ENCODE measurements at regions of chr2 and their contacts with region 1.

Region 1: GRCh38 chr2:240310645-240311044 is 124.8 kb upstream of the GPC1 start:
- DNase-seq: no peak
- ATAC-seq: peak; percentile 58
- H3K4me3 ChIP-seq: no peak overlapping the region
- H3K27ac ChIP-seq: no peak overlapping the region
- H3K4me1 ChIP-seq: no peaks in the 10 kb centered on the region
- H3K27me3 ChIP-seq: peaks cover 4 to 30% of the 10 kb centered on the region in 2 experiments; a peak in 3 of 5 replicates
- CTCF ChIP-seq: no peak
- EP300 ChIP-seq: no peak
- POLR2A ChIP-seq: no peak
- RAD21 ChIP-seq: no peak

Region 2: DNA sequence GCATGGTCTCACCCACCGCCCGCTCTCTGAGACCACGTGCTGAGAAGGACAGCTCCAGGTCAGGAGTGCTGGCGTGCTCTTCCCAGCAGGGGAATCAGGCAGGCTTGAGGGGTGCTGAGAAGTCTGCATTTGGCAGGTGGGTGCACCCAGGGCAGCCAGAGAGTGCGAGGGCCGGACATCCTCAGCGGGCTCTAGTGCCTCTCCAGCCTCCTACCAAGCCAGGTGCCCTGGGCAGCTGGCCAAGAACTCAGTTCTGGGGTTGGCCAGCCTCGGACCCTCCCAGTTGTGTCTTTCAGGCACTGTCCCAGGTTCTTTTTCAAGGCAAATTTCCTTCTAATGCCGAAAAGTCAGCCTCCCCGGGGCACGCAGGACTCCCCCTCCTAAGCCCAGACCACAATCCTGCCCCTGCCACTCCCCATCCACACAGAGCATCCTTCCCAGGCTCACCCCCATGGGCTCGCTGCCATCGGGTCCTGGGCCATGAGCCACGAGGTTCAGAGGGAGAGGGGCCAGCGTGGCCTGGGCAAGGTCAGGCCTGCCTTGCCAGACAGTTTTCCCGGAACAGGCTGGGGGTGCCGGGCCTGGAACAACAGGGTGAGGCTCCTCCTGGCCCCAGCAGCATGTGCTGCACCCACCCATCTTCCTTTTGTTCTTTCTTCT is 72.6 kb after region 1 on chr2:
- CTCF ChIA-PET with region 1: no interaction called
- POLR2A ChIA-PET with region 1: no interaction called
- in situ Hi-C with region 1: no loop called
- intact Hi-C with region 1: no loop called
- DNase-seq: no peak
- ATAC-seq: no peak
- H3K4me3 ChIP-seq: no peak overlapping the region
- H3K27ac ChIP-seq: no peak overlapping the region
- H3K4me1 ChIP-seq: 0 out of 2 replicates have a peak, but pooled peaks cover 8% of the 10 kb centered on the region
- H3K27me3 ChIP-seq: peaks cover 6 to 35% of the 10 kb centered on the region in 2 experiments; a peak in 4 of 5 replicates
- CTCF ChIP-seq: no peak
- EP300 ChIP-seq: no peak
- POLR2A ChIP-seq: no peak
- RAD21 ChIP-seq: no peak

Region 3: DNA sequence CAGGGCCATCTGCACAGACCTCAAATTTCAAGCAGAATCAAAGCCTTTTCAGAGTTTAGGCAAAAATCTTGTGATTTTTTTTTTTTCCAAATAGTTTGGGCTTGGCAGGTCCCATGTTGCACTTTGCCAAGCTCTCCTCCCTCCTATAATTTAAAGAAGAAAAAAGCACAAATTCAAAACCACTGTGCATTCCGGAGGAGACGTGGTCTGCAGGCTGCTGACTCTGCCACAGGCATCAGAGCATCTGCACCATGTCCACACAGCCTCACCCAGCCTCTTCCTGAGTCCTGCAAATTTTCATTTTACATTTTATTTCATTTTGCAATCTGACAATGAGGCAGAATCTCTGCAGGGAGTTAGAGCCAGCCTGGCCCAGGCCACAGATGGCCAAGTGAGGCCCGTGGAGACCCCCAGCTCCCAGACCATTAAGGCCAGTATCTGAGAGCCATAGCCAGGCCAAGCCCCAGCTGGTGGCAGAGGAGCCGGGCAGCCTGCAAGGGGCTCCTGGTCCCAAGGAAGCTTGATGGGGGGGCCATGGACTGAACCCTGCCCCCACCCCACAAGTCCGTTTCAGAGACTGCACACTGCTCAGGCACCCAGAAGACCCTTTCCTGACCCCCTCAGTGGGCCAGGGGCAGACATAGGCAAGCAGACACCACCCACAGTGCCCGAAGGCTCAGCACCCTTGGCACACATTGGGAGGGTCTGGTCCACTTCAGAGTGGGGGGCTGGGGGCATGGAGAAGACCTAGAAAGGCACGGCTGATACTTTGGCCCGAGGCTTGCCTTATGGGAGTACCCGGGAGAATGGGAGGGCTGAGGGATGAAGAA is 109.3 kb after region 1 on chr2:
- CTCF ChIA-PET with region 1: no interaction called
- POLR2A ChIA-PET with region 1: no interaction called
- in situ Hi-C with region 1: no loop called
- intact Hi-C with region 1: loop called (anchors 5 kb)
- DNase-seq: no peak
- ATAC-seq: no peak
- H3K4me3 ChIP-seq: no peak overlapping the region
- H3K27ac ChIP-seq: no peak overlapping the region
- H3K4me1 ChIP-seq: no peaks in the 10 kb centered on the region
- H3K27me3 ChIP-seq: peaks cover 4 to 29% of the 10 kb centered on the region in 2 experiments; a peak in 4 of 5 replicates
- CTCF ChIP-seq: no peak
- EP300 ChIP-seq: no peak
- POLR2A ChIP-seq: no peak
- RAD21 ChIP-seq: no peak

Measured in HepG2 (cell line).